Activated CD4-positive, alpha-beta memory T cell treated with anti-CD3 and anti-CD28 coated beads for 36 hours (primary cell): ENCODE measurements at regions of chr19 and their contacts with region 1.

Region 1: GRCh38 chr19:2750808-2751443 is 11.1 kb upstream of the SLC39A3 start:
- DNase-seq: no peak
- H3K4me3 Mint-ChIP-seq: no peak overlapping the region
- H3K27ac Mint-ChIP-seq: no peak overlapping the region
- H3K4me1 Mint-ChIP-seq: peaks cover 5% of the 10 kb centered on the region
- H3K27me3 Mint-ChIP-seq: no peaks in the 10 kb centered on the region

Region 2: DNA sequence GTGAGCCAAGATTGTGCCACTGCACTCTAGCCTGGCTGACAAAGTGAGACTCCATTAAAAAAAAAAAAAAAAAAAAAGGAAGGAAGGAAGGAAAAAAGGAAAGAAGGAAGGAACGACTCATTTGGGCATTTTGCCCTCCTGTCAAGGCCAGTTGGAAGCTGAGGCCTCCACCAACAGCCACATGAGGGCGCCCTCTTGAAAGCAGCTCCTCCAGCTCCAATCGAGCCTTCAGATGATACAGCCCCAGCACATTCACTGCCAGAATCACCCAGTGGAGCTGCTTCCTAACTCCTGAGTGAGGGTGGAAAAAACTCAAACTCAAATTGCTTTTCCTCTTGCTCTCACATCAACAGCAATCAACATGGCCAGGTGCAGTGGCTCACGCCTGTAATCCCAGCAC is 89.3 kb before region 1 on chr19:
- CTCF ChIA-PET with region 1: interaction called, 20 read pairs
- POLR2A ChIA-PET with region 1: no interaction called
- intact Hi-C with region 1: no loop called
- DNase-seq: peak; percentile 53
- H3K4me3 Mint-ChIP-seq: no peak overlapping the region
- H3K27ac Mint-ChIP-seq: no peak overlapping the region
- H3K4me1 Mint-ChIP-seq: no peaks in the 10 kb centered on the region
- H3K27me3 Mint-ChIP-seq: no peaks in the 10 kb centered on the region

Region 3: DNA sequence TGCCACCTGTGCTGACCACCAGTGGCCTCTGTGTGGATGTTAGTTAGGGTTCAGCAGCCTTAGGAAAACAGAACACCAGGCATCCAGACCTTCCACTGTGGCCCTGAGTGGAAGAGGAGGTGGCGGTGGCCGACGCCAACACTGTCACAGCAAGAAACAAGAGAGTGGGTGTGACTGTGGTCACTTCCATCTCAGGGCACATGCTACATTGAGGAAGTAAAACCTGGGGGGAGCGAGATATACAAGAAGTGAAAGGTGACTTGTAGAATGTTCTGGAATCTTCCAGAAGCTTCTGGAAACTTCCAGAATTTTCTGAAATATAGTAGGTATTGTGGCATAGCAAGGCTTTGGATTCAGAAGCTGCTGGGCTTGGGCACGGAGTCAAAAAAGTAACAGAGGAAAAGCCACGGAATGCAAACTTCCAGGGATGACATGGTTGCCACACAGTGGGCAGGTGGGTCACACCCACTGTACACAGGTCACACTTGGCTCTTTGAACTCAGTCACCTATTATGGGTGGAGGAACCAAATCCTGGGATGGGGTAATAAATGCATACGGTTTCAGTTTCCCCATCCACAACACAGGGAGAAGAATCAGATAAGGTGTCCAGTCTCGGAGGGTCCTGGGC is 72.8 kb before region 1 on chr19:
- CTCF ChIA-PET with region 1: no interaction called
- POLR2A ChIA-PET with region 1: no interaction called
- intact Hi-C with region 1: no loop called
- DNase-seq: no peak
- H3K4me3 Mint-ChIP-seq: no peak overlapping the region
- H3K27ac Mint-ChIP-seq: no peak overlapping the region
- H3K4me1 Mint-ChIP-seq: no peaks in the 10 kb centered on the region
- H3K27me3 Mint-ChIP-seq: no peaks in the 10 kb centered on the region

Region 4: DNA sequence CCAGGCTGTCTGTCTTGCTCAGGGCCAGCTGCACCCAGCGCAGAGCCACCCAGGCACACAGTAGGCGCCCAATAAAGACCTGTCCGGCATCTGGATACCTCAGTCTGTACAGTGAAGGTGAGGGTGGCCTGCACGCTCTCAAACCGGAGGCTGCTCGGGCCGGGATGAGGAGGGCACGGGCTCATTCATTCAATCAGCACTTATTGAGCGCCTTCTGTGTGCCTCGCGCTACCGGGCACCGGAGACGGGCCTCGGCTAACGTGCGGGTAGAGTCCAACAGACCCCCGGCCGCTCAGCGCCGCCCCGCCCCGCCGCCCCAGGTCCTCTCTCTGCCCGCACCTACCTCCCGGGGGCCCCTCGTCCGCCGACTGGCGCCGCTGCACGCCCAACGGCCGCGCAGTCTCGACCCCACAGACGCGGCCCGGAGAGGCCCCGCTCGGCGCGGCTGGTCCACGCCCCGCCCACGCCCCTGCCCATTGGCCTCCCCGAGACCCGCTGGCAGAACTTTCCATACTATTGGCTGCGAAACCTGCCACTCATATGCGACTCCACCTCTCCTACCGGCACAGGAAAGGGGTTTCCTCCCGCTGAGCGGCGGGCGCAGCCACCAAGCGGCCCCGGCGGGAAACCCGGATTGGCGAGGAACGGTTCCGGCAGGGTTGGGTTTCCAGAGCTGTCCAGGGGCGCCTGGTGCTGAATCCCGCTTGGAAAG is 11.2 kb before region 1 on chr19 and contains the start of gene SLC39A3:
- CTCF ChIA-PET with region 1: interaction called, 10 read pairs
- POLR2A ChIA-PET with region 1: no interaction called
- intact Hi-C with region 1: no loop called
- DNase-seq: peak; percentile 99
- H3K4me3 Mint-ChIP-seq: peak within 1 kb of the TSS; percentile 88
- H3K27ac Mint-ChIP-seq: no peak within 1 kb of the TSS
- H3K4me1 Mint-ChIP-seq: peaks cover 12% of the 10 kb centered on the region
- H3K27me3 Mint-ChIP-seq: peaks cover 9% of the 10 kb centered on the region
- total RNA-seq, gene SLC39A3: 21.0 to 24.0 TPM